Heart right ventricle (tissue), 16 donors: ENCODE measurements at regions of chr6 and their contacts with region 1.

Region 1: DNA sequence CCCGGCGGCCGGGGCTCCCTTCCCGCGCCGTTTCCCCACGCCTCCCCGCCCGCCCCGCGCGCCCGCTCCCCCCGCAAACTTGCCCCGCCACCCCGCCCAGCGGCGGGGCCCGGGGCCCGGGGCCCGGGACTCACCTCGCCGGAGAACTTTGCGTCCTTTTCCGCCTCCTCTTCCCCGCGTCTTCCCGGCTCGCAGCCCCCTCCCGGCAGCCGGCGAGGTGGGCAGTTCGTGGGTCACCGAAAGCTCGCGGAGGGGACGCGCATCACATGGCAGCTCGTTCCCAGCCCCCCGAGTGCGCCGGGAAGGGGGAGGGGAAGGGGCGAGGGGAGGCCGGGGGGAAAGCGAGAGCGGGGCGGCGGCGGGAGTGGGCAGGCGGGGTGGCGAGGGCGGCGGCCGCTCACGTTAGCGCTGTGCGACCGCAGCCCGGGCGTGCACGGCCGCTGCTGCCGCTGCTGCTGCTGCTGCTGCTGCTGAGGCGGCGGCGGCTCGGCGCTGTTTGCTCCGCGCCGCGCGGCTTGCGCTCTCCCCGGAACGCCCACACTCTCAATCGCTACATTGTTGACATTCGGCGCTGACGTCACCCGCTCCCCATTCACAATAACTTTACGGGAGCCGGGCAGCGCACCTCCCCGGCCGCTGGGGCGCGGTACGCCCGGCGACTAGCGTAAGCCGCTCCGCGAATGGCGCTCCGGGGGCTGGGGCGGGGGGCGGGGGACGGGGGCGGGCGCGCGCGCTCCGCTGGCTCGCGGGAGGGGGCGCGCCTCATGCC is at the start of gene BACH2:
- DNase-seq: peak; percentile 87 to 91
- ATAC-seq: peak; percentile 64 to 87 (median 75)
- H3K4me3 ChIP-seq: peak within 1 kb of the TSS; percentile 48 to 93 (median 80)
- H3K27ac ChIP-seq: peak within 1 kb of the TSS; percentile 74 to 92 (median 82)
- H3K4me1 ChIP-seq: peaks cover 0 to 29% (median 14%) of the 10 kb centered on the region in 9 donors
- H3K27me3 ChIP-seq: peaks cover 0 to 53% (median 0%) of the 10 kb centered on the region in 7 donors
- CTCF ChIP-seq: peak in 4 of 9 donors; percentile 19 to 38 (median 27)
- total RNA-seq, gene BACH2: 1.5 to 4.7 (median 2.8) TPM

Region 2: DNA sequence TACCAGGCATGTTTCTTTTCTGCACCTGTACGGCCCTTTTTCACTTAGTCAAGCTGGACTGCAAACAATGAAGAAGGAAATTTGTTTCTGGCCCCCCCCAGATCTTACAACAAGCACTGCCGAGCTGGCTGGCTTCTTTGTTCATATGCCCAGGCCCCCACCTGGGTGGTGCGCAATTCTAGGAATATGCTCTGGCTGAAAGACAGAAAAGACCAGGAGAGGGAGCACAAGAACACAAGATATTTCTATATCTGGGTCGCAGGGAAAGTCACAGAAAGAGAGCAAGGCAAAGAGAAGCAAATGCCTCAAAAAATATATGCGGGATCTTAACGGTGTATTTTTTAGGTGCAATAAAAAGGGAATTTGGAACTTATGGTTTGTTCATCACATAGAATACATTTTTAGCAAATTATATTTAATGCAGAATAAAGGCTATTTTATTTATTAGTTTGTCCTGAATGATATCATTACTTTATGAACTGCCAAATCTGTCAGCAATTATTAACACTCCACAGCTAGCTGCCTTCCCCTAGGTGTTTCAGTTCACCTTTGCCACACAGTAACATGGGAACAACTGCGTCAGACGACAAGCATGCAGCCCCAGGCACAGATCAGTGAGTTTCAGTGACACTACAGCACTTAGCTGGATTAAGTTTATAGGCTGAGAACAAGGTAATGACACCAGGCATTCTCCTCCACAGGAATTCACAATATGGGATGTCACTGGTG is 325.8 kb before region 1 on chr6:
- intact Hi-C with region 1: loop called in 8 of 10 experiments (anchors 2 to 10 kb)
- DNase-seq: peak; percentile 18 to 48
- ATAC-seq: peak; percentile 24 to 90 (median 79)
- H3K4me3 ChIP-seq: no peak overlapping the region
- H3K27ac ChIP-seq: no peak overlapping the region
- H3K4me1 ChIP-seq: peaks cover 7 to 31% (median 21%) of the 10 kb centered on the region in 9 donors
- H3K27me3 ChIP-seq: no peaks in the 10 kb centered on the region
- CTCF ChIP-seq: peak in 8 of 9 donors; percentile 20 to 80 (median 68)

Region 3: DNA sequence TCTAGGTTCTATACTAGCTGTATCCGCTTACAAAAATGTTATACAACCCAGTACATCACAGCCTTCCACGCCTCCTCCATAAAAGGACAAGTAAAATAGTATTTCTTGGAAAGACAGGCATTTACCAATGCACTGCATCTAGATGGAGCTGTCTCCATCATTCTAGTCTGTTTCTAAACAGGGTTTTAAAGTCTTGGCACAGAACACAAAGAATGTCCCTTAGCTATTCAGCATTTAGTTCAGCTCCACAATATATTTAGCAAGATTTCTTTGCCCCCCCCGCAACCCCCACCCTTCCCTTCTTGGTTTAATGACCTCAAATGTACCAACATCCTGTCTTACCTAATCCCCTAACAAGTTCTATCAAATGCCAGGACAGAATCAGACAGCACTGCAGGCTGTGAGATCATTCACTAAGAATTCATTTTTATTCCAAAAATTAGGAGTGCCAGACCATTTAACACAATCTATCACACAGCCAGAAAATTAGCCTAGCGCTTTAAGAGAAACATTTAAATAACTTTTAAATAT is 198.5 kb before region 1 on chr6:
- intact Hi-C with region 1: loop called in 4 of 10 experiments (anchors 5 to 10 kb)
- DNase-seq: peak; percentile 17 to 39
- ATAC-seq: peak; percentile 86 to 93 (median 89)
- H3K4me3 ChIP-seq: no peak overlapping the region
- H3K27ac ChIP-seq: peak overlapping the region in 9 of 10 donors; percentile 37 to 85 (median 72)
- H3K4me1 ChIP-seq: peaks cover 2 to 45% (median 27%) of the 10 kb centered on the region in 9 donors
- H3K27me3 ChIP-seq: no peaks in the 10 kb centered on the region
- CTCF ChIP-seq: peak in 7 of 9 donors; percentile 25 to 63 (median 51)

Region 4: GRCh38 chr6:90179190-90180169 is 117.0 kb before region 1 on chr6:
- intact Hi-C with region 1: loop called in 1 of 10 experiments (anchors 10 kb)
- DNase-seq: no peak
- ATAC-seq: no peak
- H3K4me3 ChIP-seq: no peak overlapping the region
- H3K27ac ChIP-seq: no peak overlapping the region
- H3K4me1 ChIP-seq: peaks cover 0 to 49% (median 37%) of the 10 kb centered on the region in 9 donors
- H3K27me3 ChIP-seq: no peaks in the 10 kb centered on the region
- CTCF ChIP-seq: peak in 8 of 9 donors; percentile 11 to 53 (median 38)

Region 5: DNA sequence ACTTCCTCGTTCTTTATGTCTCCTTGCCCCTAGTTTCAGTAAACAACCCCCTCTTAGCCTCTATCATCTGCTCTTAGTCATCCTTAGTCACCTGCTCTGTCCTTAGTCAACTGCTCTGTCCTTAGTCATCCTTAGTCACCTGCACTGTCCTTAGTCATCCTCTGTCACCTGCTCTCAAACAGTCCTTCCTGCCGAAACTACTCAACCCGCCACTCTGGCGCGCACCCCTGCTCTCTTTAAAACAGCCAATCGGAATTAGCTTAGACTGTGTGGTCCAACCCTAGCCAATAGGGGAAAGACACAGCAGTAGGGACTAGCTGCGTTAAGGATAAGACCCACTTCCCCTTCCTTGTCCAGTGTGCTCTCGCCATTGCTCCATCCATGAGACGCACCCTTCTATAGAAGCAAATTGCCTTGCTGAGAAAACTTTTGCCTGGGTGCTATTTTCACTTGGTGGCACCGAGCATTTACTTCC is 73.8 kb before region 1 on chr6:
- intact Hi-C with region 1: loop called in 6 of 10 experiments (anchors 2 to 10 kb)
- DNase-seq: no peak
- ATAC-seq: no peak
- H3K4me3 ChIP-seq: no peak overlapping the region
- H3K27ac ChIP-seq: no peak overlapping the region
- H3K4me1 ChIP-seq: peaks cover 5 to 33% (median 17%) of the 10 kb centered on the region in 9 donors
- H3K27me3 ChIP-seq: no peaks in the 10 kb centered on the region
- CTCF ChIP-seq: no peak